Naive thymus-derived CD4-positive, alpha-beta T cell (primary cell): ENCODE measurements at regions of chrX and their contacts with region 1.

Region 1: DNA sequence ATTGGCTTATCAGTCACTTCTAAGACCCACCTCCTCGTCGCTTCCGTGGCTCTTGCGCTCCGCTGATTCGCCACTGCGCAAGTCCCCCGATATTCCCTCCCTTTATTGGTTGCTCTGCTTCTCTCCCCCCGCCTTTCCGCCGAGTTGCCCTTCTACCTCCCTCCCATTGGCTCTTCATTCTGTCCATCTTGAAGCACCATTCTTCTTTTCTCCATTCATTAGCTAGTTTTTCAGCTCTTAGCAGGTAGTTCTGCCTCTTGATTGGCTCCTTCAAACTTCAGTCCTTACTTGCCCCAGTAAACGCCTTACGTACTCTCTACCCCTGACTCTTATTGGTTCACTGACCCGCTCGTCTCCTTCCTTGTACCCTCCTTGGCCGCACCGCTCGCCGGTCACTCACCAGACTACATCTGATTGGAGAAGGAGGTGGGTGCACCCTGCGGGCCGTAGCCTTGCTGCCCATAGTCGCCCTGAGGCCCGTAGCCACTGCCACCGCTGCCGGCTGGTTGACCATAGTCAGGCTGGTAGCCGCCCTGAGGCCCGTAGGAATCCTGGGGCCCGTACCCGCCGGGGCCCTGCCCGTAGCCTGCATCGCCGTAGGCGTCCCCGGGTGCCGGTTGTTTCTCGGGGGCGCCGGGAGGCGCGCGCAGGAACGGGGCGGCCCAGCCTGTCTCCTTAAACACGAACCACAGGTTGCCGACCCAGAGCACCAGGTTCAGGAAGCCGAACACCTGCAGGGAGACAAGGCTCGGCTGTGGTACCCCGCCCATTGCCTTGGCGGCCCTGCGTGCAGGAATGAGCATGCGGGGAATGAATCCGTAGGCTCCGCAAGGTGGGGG is 5.1 kb upstream of the PRICKLE3 start:
- DNase-seq: peak; percentile 43 to 95 (median 90)
- ATAC-seq: peak; percentile 92
- H3K4me3 ChIP-seq: peak overlapping the region; percentile 96
- H3K4me3 Mint-ChIP-seq: peak overlapping the region; percentile 86 to 95 (median 92)
- H3K27ac ChIP-seq: peak overlapping the region; percentile 82
- H3K27ac Mint-ChIP-seq: peak overlapping the region; percentile 77 to 98 (median 94)
- H3K4me1 ChIP-seq: peaks cover 0 to 15% of the 10 kb centered on the region in 2 donors
- H3K4me1 Mint-ChIP-seq: peaks cover 11 to 41% (median 26%) of the 10 kb centered on the region in 7 donors
- H3K27me3 ChIP-seq: no peaks in the 10 kb centered on the region
- H3K27me3 Mint-ChIP-seq: no peaks in the 10 kb centered on the region

Region 2: DNA sequence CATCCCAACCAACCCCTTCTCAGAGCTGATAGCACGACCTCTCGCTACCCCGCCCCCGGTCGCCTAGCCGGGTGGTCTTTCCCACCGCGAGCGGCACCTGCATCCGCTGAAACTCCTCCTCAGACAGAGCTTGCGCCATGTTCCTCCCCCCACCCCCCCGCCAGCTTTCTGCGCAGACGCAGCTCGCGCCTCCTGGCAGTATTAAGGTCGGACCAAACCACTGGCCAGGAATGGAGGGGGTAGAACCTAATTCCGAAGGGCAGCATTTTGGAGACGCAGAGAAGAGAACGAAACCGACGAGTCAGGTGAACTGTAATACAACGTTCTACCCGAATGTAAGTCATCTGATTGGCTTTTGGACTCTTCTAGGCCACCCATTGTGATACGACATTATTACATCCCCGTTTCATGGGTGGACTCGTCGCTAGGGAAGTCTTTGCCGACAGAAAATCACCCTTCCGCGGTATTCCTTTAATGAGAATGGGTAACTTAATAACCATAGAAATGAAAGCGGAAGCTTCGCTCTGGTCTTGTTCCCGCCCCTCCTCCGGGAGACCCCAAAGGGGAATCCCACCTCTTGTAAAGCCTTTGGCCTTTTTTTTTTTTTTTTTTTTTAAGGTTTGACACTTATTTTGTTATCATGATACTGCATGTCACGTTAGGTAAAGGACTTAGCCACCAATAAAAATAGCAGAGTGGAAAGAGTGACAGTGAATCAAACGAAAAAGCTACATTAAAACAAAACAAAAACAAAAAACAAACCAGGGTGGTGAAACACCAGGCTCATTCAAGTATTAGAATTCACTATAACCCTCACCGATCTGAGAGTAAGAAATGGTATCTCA is 188.9 kb before region 1 on chrX and contains the start of gene GRIPAP1:
- CTCF ChIA-PET with region 1: no interaction called
- POLR2A ChIA-PET with region 1: no interaction called
- intact Hi-C with region 1: loop called in 1 of 2 experiments (anchors 1 kb)
- DNase-seq: peak; percentile 61 to 87 (median 79)
- ATAC-seq: peak; percentile 88
- H3K4me3 ChIP-seq: peak within 1 kb of the TSS; percentile 97
- H3K4me3 Mint-ChIP-seq: peak within 1 kb of the TSS; percentile 94 to 99 (median 98)
- H3K27ac ChIP-seq: peak within 1 kb of the TSS; percentile 97
- H3K27ac Mint-ChIP-seq: peak within 1 kb of the TSS; percentile 92 to 100 (median 98)
- H3K4me1 ChIP-seq: peaks cover 9 to 10% of the 10 kb centered on the region in 2 donors
- H3K4me1 Mint-ChIP-seq: peaks cover 7 to 43% (median 32%) of the 10 kb centered on the region in 7 donors
- H3K27me3 ChIP-seq: no peaks in the 10 kb centered on the region
- H3K27me3 Mint-ChIP-seq: no peaks in the 10 kb centered on the region
- total RNA-seq, gene GRIPAP1: 103 to 108 (median 105) TPM

Region 3: GRCh38 chrX:49120099-49120498 is 71.2 kb before region 1 on chrX:
- CTCF ChIA-PET with region 1: no interaction called
- POLR2A ChIA-PET with region 1: no interaction called
- intact Hi-C with region 1: loop called in 1 of 2 experiments (anchors 1 kb)
- DNase-seq: no peak
- ATAC-seq: no peak
- H3K4me3 ChIP-seq: no peak overlapping the region
- H3K4me3 Mint-ChIP-seq: peak overlapping the region in 3 of 10 donors; percentile 9 to 24 (median 12)
- H3K27ac ChIP-seq: no peak overlapping the region
- H3K27ac Mint-ChIP-seq: peak overlapping the region in 2 of 9 donors; percentile 12 to 30
- H3K4me1 ChIP-seq: peaks cover 16 to 18% of the 10 kb centered on the region in 2 donors
- H3K4me1 Mint-ChIP-seq: peaks cover 32 to 59% (median 37%) of the 10 kb centered on the region in 7 donors
- H3K27me3 ChIP-seq: no peaks in the 10 kb centered on the region
- H3K27me3 Mint-ChIP-seq: no peaks in the 10 kb centered on the region

Region 4: GRCh38 chrX:49155900-49156837 is 35.1 kb before region 1 on chrX:
- CTCF ChIA-PET with region 1: interaction called, 3 read pairs
- POLR2A ChIA-PET with region 1: interaction called, 4 read pairs
- intact Hi-C with region 1: loop called (anchors 1 to 5 kb)
- DNase-seq: peak; percentile 75 to 87 (median 85)
- ATAC-seq: peak; percentile 97
- H3K4me3 ChIP-seq: peak overlapping the region; percentile 74
- H3K4me3 Mint-ChIP-seq: peak overlapping the region; percentile 93 to 99 (median 97)
- H3K27ac ChIP-seq: peak overlapping the region; percentile 91
- H3K27ac Mint-ChIP-seq: peak overlapping the region; percentile 89 to 99 (median 96)
- H3K4me1 ChIP-seq: peaks cover 0 to 6% of the 10 kb centered on the region in 2 donors
- H3K4me1 Mint-ChIP-seq: peaks cover 7 to 21% (median 13%) of the 10 kb centered on the region in 7 donors
- H3K27me3 ChIP-seq: no peaks in the 10 kb centered on the region
- H3K27me3 Mint-ChIP-seq: peaks cover 0 to 2% (median 0%) of the 10 kb centered on the region in 5 donors

Region 5: GRCh38 chrX:49172280-49172780 is 18.9 kb before region 1 on chrX:
- CTCF ChIA-PET with region 1: interaction called, 5 read pairs
- POLR2A ChIA-PET with region 1: interaction called, 13 read pairs
- intact Hi-C with region 1: loop called in 1 of 2 experiments (anchors 1 kb)
- DNase-seq: peak in 8 of 9 donors; percentile 26 to 70 (median 33)
- ATAC-seq: peak; percentile 79
- H3K4me3 ChIP-seq: peak overlapping the region; percentile 63
- H3K4me3 Mint-ChIP-seq: peak overlapping the region; percentile 78 to 92 (median 87)
- H3K27ac ChIP-seq: peak overlapping the region; percentile 62
- H3K27ac Mint-ChIP-seq: peak overlapping the region; percentile 2 to 85 (median 82)
- H3K4me1 ChIP-seq: peaks cover 6 to 14% of the 10 kb centered on the region in 2 donors
- H3K4me1 Mint-ChIP-seq: peaks cover 9 to 36% (median 26%) of the 10 kb centered on the region in 7 donors
- H3K27me3 ChIP-seq: no peaks in the 10 kb centered on the region
- H3K27me3 Mint-ChIP-seq: no peaks in the 10 kb centered on the region

Region 6: DNA sequence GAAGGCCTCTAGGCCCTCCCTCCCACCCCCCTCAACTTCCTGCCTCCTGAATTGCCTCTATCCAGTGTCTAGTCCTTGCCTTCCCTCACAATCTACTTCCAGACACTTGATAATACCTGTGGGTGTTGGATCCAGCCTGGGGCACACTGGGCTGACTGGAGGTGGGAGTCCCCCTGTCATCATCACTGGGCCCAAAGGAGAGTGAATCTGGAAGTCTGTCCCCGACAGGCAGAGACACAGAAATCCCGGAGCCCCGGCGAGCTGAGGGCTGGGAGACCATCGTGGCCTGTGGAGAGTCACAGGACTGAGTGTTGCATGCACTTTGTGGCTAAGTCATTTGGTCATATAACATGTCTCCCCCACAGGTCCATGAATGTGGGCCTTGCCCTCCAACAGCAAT is 17.1 kb after region 1 on chrX:
- CTCF ChIA-PET with region 1: no interaction called
- POLR2A ChIA-PET with region 1: no interaction called
- intact Hi-C with region 1: no loop called
- DNase-seq: no peak
- ATAC-seq: no peak
- H3K4me3 ChIP-seq: no peak overlapping the region
- H3K4me3 Mint-ChIP-seq: no peak overlapping the region
- H3K27ac ChIP-seq: no peak overlapping the region
- H3K27ac Mint-ChIP-seq: no peak overlapping the region
- H3K4me1 ChIP-seq: no peaks in the 10 kb centered on the region
- H3K4me1 Mint-ChIP-seq: no peaks in the 10 kb centered on the region
- H3K27me3 ChIP-seq: no peaks in the 10 kb centered on the region
- H3K27me3 Mint-ChIP-seq: peaks cover 0 to 7% (median 0%) of the 10 kb centered on the region in 5 donors

Region 7: GRCh38 chrX:49754233-49754857 is 563.1 kb after region 1 on chrX:
- CTCF ChIA-PET with region 1: interaction called, 5 read pairs
- POLR2A ChIA-PET with region 1: no interaction called
- intact Hi-C with region 1: loop called in 1 of 2 experiments (anchors 1 kb)
- DNase-seq: peak; percentile 6 to 52 (median 42)
- ATAC-seq: peak; percentile 85
- H3K4me3 ChIP-seq: no peak overlapping the region
- H3K4me3 Mint-ChIP-seq: peak overlapping the region in 2 of 10 donors; percentile 37 to 50
- H3K27ac ChIP-seq: no peak overlapping the region
- H3K27ac Mint-ChIP-seq: no peak overlapping the region
- H3K4me1 ChIP-seq: no peaks in the 10 kb centered on the region
- H3K4me1 Mint-ChIP-seq: no peaks in the 10 kb centered on the region
- H3K27me3 ChIP-seq: no peaks in the 10 kb centered on the region
- H3K27me3 Mint-ChIP-seq: peaks cover 0 to 31% (median 4%) of the 10 kb centered on the region in 5 donors